Esophagus squamous epithelium (tissue), 5 donors: ENCODE measurements at regions of chr17 and their contacts with region 1.

Region 1: GRCh38 chr17:76014184-76014924 is 12.8 kb downstream of the EVPL start:
- DNase-seq: no peak
- H3K4me3 ChIP-seq: no peak overlapping the region
- H3K27ac ChIP-seq: peak overlapping the region in 3 of 4 donors; percentile 10 to 42 (median 34)
- H3K4me1 ChIP-seq: peaks cover 0 to 25% (median 11%) of the 10 kb centered on the region in 3 donors
- H3K27me3 ChIP-seq: peaks cover 0 to 9% (median 0%) of the 10 kb centered on the region in 4 donors
- CTCF ChIP-seq: peak; percentile 87 to 98 (median 92)
- POLR2A ChIP-seq: no peak

Region 2: DNA sequence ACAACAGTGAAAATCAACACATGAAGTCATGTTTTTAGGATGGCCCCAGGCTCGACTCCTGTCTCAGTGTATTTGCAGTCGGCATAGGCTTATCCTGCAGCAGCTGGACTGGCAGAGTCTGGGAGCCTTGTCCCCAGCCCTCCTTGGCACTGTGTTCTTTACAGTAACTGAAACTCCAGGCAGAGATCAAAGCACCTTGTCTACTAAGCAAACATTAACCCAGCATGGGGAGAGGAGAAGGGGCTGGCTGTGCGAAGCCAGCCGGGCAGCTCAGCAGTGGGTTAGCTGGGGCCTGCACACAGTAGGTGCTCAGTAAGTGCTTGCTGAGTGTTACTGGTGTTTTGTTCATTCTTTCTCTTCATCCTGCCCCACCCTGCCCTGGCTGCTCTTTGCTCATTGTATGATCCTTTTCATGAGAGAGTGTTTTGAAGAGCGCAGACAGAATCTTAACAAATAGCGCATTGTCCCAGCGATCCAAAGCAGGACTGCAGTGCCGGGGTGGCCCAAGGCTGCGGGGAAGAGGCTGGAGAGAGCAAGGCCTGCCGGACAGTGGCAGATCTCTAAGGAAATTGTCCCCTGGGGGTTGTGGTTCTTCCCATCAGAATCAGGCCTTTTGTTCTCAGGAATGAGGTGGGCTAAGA is 316.6 kb before region 1 on chr17:
- intact Hi-C with region 1: no loop called
- DNase-seq: no peak
- H3K4me3 ChIP-seq: no peak overlapping the region
- H3K27ac ChIP-seq: peak overlapping the region; percentile 83 to 92 (median 86)
- H3K4me1 ChIP-seq: peaks cover 48 to 95% (median 85%) of the 10 kb centered on the region in 3 donors
- H3K27me3 ChIP-seq: no peaks in the 10 kb centered on the region
- CTCF ChIP-seq: no peak
- POLR2A ChIP-seq: no peak

Region 3: DNA sequence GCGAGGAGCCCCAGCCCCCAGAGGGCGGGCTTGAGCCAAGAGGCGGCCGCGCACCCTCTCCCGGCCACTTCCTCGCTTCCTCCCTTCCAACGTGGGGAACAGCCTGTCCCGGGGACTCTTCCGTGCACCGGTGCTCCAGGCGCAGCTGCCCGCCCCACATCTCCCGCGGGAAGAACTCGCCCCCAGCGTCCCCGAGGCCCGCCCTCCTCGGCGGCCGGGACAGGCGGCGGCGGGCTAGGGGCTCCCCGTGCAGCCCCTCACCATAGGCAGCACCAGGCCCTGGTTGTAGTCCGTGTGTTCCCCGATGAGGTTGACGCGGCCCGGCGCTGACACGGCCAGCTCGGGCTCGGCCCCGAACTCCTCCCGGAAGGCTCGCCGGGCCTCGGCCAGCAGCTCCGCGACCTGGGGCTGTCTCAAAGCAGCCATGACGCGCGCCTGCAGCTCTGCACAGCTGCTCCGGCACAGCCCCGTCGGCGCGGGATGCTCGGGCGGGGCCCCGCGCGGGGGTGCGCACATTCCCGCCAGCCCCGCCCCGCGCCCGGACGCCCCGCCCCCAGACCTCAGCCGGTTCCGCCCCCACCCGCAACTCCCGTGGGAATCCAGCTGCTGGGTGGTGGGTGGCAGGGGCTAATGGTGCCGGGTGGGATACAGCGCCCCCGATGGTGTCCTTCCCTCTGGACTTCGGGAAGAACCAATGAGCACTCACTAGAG is 249.5 kb before region 1 on chr17 and contains the start of gene GALK1:
- intact Hi-C with region 1: no loop called
- DNase-seq: no peak
- H3K4me3 ChIP-seq: peak within 1 kb of the TSS; percentile 51 to 85 (median 70)
- H3K27ac ChIP-seq: peak within 1 kb of the TSS; percentile 73 to 92 (median 88)
- H3K4me1 ChIP-seq: peaks cover 18 to 34% (median 28%) of the 10 kb centered on the region in 3 donors
- H3K27me3 ChIP-seq: no peaks in the 10 kb centered on the region
- CTCF ChIP-seq: peak; percentile 51 to 71 (median 65)
- POLR2A ChIP-seq: peak in 2 of 4 donors; percentile 72 to 79
- total RNA-seq, gene GALK1: 16.4 to 30.9 (median 20.2) TPM

Region 4: DNA sequence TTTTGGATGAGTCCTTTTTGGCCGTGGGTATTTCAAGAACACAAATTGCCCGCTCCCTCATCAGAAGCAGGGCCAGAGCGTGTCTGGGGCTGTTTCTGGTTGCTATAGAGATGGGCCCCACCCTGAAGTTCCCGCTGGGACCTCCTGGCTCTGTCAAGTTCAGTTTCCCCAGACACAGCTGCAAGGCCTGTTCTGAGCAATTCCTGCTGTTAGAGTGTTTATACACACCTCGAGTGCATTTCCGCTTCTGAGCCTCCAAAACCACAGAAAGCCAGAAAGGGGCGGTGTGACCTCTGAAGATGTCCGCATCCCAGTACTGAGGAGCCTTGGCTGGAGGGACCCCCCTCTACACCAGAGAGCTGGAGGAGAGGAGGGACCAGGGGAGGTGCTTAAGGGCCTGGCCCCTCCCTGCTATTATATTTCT is 149.9 kb before region 1 on chr17:
- intact Hi-C with region 1: no loop called
- DNase-seq: no peak
- H3K4me3 ChIP-seq: peak overlapping the region in 1 of 4 donors; percentile 0
- H3K27ac ChIP-seq: peak overlapping the region; percentile 66 to 87 (median 77)
- H3K4me1 ChIP-seq: peaks cover 12 to 52% (median 35%) of the 10 kb centered on the region in 3 donors
- H3K27me3 ChIP-seq: no peaks in the 10 kb centered on the region
- CTCF ChIP-seq: peak in 1 of 6 experiments; percentile 22
- POLR2A ChIP-seq: no peak

Region 5: DNA sequence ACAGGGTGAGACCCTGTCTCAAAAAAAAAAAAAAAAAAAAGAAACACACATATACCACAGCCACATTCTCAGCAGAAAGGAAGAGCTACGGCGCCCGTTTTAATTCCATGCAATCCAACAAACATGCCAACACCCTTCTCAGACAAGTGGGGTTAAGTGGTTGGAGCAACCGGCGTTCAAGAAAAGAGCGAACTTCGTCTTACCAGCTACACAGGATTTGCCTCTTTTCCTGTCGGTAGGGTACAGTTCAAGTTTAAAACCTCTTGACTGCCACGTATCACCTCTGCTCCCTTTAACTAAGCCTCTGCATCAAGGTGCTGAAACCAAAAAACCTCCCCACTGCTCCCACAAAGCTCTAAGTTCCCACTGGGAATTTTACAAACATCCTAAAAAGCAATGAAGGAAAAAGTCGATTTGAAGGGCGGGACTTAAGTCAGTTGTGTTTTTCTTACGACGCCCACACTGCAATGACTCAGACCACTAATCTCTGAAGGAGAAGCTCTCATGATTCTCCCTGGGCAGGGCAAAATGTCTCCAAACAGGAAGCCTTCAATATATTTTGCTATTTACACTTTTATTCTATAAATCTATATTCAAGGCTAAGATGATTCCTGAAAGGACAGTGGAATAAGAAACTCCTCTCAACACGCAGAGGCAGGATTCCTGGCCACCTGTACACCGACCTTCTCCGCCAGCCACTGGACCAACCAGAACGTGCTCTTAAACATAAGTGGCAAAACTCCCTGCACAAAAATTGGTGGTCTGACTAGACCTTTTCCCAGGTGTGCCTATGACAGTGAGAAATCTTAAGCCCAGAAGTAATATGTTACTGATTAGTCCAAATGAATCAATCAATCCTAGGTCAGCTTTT is 39.1 kb after region 1 on chr17:
- intact Hi-C with region 1: loop called (anchors 5 kb)
- DNase-seq: no peak
- H3K4me3 ChIP-seq: peak overlapping the region; percentile 8 to 43 (median 26)
- H3K27ac ChIP-seq: peak overlapping the region; percentile 89 to 93 (median 92)
- H3K4me1 ChIP-seq: peaks cover 15 to 89% (median 24%) of the 10 kb centered on the region in 3 donors
- H3K27me3 ChIP-seq: no peaks in the 10 kb centered on the region
- CTCF ChIP-seq: no peak
- POLR2A ChIP-seq: no peak

Region 6: GRCh38 chr17:76182016-76182764 is 167.8 kb after region 1 on chr17:
- intact Hi-C with region 1: no loop called
- DNase-seq: peak; percentile 55
- H3K4me3 ChIP-seq: no peak overlapping the region
- H3K27ac ChIP-seq: no peak overlapping the region
- H3K4me1 ChIP-seq: peaks cover 0 to 7% (median 0%) of the 10 kb centered on the region in 3 donors
- H3K27me3 ChIP-seq: peaks cover 0 to 4% (median 0%) of the 10 kb centered on the region in 4 donors
- CTCF ChIP-seq: peak; percentile 87 to 90 (median 89)
- POLR2A ChIP-seq: no peak

Region 7: DNA sequence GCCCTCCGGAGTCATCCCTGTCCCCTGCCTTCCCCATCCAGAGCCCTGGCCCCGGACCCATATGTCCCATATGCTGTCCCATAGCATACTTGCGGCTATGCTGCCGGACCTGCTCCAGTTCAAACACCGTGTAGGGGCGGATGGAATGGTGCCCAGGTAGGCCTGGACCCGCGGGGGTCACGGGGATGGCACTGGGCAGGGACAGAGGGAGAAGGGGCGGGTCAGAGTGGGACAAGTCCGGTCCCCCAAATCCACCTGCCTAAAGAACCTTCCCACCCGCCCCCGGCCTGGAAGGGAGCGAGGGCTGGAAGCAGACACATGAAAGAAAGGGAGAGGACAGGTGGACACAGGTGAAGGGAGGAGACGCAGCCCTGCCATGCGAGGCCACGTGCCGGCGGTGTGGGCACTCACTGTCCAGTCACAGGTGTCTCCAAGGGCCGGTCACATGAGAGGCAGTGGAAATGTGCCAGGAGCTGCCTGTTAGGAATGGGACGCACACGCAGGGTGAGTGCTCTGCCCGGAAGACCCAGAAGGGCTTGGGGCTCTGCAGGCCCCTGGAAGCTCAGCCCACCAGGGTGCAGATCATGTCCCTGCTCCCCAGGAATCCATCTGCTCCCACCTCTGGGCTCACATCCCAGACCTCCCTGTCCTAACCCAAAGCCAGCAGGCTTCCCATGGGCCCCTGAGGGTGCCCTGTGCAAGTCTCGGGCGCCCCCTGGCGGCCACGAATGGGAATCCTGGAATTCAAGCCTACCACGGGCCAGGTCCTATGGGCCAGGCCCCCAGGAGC is 264.8 kb after region 1 on chr17:
- intact Hi-C with region 1: loop called (anchors 10 kb)
- DNase-seq: peak; percentile 33
- H3K4me3 ChIP-seq: no peak overlapping the region
- H3K27ac ChIP-seq: no peak overlapping the region
- H3K4me1 ChIP-seq: peaks cover 11 to 44% (median 17%) of the 10 kb centered on the region in 3 donors
- H3K27me3 ChIP-seq: no peaks in the 10 kb centered on the region
- CTCF ChIP-seq: peak; percentile 93 to 99 (median 97)
- POLR2A ChIP-seq: no peak